Calu3 (cell line): ENCODE measurements at regions of chr9 and their contacts with region 1.

Region 1: GRCh38 chr9:130286781-130287428 is 21.3 kb downstream of the HMCN2 start:
- DNase-seq: no peak
- H3K4me3 Mint-ChIP-seq: no peak overlapping the region
- H3K27ac Mint-ChIP-seq: no peak overlapping the region
- H3K4me1 Mint-ChIP-seq: peaks cover 7% of the 10 kb centered on the region
- H3K27me3 Mint-ChIP-seq: peaks cover 98% of the 10 kb centered on the region
- CTCF ChIP-seq: no peak

Region 2: GRCh38 chr9:130265431-130266235 is 21.3 kb before region 1 on chr9 and contains the start of gene HMCN2:
- CTCF ChIA-PET with region 1: interaction called, 11 read pairs
- intact Hi-C with region 1: no loop called
- DNase-seq: no peak
- H3K4me3 Mint-ChIP-seq: no peak within 1 kb of the TSS
- H3K27ac Mint-ChIP-seq: no peak within 1 kb of the TSS
- H3K4me1 Mint-ChIP-seq: peaks cover 8% of the 10 kb centered on the region
- H3K27me3 Mint-ChIP-seq: peaks cover 80% of the 10 kb centered on the region
- CTCF ChIP-seq: no peak
- total RNA-seq, gene HMCN2: 0.32 TPM in 1 of 2 replicates, not detected in the other